Heart left ventricle (tissue), 16 donors: ENCODE measurements at regions of chr15 and their contacts with region 1.

Region 1: DNA sequence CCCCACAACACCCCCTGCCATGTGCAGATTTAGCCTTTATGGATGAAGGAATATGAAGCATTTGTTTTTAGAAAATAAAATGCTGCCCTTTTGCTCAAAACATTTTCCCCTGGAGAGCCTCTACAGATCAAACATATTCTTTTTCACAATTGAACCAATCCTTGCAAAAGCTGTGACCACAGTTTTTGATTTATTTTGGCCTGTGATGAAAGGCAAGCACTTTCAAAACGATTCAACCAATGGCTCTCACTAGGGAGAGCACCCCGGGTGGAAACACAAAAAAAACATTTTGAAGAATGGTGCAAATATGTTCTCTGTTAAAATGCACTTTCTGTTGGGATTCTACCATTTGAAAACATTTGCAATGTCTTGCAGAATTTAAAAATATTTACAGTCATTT is 476.0 kb upstream of the ONECUT1 start:
- DNase-seq: no peak
- ATAC-seq: no peak
- H3K4me3 ChIP-seq: no peak overlapping the region
- H3K27ac ChIP-seq: no peak overlapping the region
- H3K4me1 ChIP-seq: no peaks in the 10 kb centered on the region
- H3K27me3 ChIP-seq: no peaks in the 10 kb centered on the region
- CTCF ChIP-seq: no peak
- POLR2A ChIP-seq: no peak

Region 2: DNA sequence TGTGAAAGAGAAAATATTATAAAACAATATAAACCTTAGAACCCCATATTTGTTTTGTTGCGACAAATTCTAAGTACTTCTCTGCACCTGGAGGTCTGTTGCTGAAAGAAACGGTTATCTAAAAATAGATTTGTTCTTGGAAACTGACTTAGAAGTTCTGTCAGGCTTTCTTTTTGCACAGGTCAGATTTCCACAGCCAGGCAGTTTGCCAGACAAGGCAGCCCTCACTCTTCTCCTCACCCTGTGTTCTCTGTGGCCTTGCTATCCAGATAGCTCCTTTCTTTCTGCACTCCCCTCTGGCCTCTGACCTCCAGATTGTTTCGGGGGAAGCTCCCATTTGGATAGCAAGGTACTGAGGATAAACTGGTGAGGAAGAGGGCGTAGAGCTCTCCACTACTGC is 62.7 kb before region 1 on chr15:
- intact Hi-C with region 1: loop called in 1 of 10 experiments (anchors 10 kb)
- DNase-seq: no peak
- ATAC-seq: no peak
- H3K4me3 ChIP-seq: no peak overlapping the region
- H3K27ac ChIP-seq: no peak overlapping the region
- H3K4me1 ChIP-seq: no peaks in the 10 kb centered on the region
- H3K27me3 ChIP-seq: peaks cover 0 to 4% (median 0%) of the 10 kb centered on the region in 9 donors
- CTCF ChIP-seq: no peak
- POLR2A ChIP-seq: no peak